PC-3 (cell line): ENCODE measurements at regions of chr4 and their contacts with region 1.

Region 1: GRCh38 chr4:25159884-25160713 is at the start of gene SEPSECS:
- DNase-seq: peak; percentile 96
- ATAC-seq: peak; percentile 70
- H3K4me3 ChIP-seq: peak within 1 kb of the TSS; percentile 87
- H3K27ac ChIP-seq: peak within 1 kb of the TSS; percentile 83
- H3K4me1 ChIP-seq: peaks cover 22% of the 10 kb centered on the region
- H3K27me3 ChIP-seq: no peaks in the 10 kb centered on the region
- CTCF ChIP-seq: no peak
- total RNA-seq, gene SEPSECS: 3.1 and 5.2 TPM in 2 replicates

Region 2: GRCh38 chr4:25172961-25173915 is 13.1 kb after region 1 on chr4:
- CTCF ChIA-PET with region 1: interaction called, 8 read pairs
- POLR2A ChIA-PET with region 1: no interaction called
- intact Hi-C with region 1: loop called (anchors 1 kb)
- DNase-seq: peak; percentile 97
- ATAC-seq: peak; percentile 93
- H3K4me3 ChIP-seq: peak overlapping the region; percentile 34
- H3K27ac ChIP-seq: peak overlapping the region; percentile 93
- H3K4me1 ChIP-seq: peaks cover 36% of the 10 kb centered on the region
- H3K27me3 ChIP-seq: no peaks in the 10 kb centered on the region
- CTCF ChIP-seq: no peak

Region 3: GRCh38 chr4:25234390-25235370 is 74.6 kb after region 1 on chr4:
- CTCF ChIA-PET with region 1: no interaction called
- POLR2A ChIA-PET with region 1: no interaction called
- intact Hi-C with region 1: loop called (anchors 1 kb)
- DNase-seq: peak; percentile 78
- ATAC-seq: peak; percentile 64
- H3K4me3 ChIP-seq: peak overlapping the region; percentile 88
- H3K27ac ChIP-seq: peak overlapping the region; percentile 29
- H3K4me1 ChIP-seq: no peaks in the 10 kb centered on the region
- H3K27me3 ChIP-seq: no peaks in the 10 kb centered on the region
- CTCF ChIP-seq: peak; percentile 53; the same call in 1 of the 2 replicates